ENCODE measurements at regions of chr2 and their contacts with region 1.

Region 1: GRCh38 chr2:113080134-113080533 is 12.4 kb downstream of the IL1F10 start:
- DNase-seq: no peak
- ATAC-seq: peak; percentile 88
- H3K4me3 ChIP-seq: no peak overlapping the region
- H3K27ac ChIP-seq: no peak overlapping the region
- H3K4me1 ChIP-seq: no peaks in the 10 kb centered on the region
- H3K27me3 ChIP-seq: no peaks in the 10 kb centered on the region; a peak in 1 of 4 replicates
- CTCF ChIP-seq: peak; percentile 86 to 89 (median 87)
- EP300 ChIP-seq: no peak
- POLR2A ChIP-seq: no peak
- RAD21 ChIP-seq: peak; percentile 82

Region 2: DNA sequence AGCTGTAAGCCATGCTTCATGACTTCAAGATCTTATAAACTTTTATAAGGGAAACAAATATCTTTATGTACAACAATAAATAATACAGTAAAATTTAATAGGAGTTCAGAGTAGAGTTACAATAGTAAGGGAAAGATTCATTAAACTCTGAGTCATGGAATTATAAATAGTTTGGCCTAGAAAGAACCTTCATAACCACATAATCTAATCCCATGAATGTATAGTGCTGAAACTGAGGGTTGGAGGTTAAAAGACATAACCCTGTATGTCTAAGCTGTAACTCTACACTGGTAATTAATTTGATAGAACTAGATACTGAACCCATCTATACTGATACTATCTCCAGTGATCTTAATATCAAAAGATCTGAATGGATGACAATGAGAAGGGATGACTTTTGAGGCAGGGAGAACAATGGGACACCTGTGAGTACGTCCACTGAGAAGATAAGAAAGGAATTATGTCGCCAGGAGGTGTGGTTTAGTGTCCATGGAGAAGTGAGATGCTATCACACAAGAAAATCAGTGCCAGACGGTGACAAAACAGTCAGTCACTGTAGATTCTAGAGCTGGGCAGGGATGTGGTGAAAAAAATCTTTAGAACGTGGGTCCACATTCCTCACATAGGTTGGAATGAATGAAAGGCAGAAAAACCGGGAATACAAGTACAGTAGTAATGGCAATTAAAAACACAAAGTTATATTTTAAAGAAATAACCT is 11.3 kb before region 1 on chr2:
- CTCF ChIA-PET with region 1: interaction called, 14 read pairs
- POLR2A ChIA-PET with region 1: no interaction called
- RAD21 ChIA-PET with region 1: interaction called, 3 read pairs
- SMC1A ChIA-PET with region 1: no interaction called
- in situ Hi-C with region 1: no loop called
- intact Hi-C with region 1: no loop called
- DNase-seq: no peak
- ATAC-seq: no peak
- H3K4me3 ChIP-seq: no peak overlapping the region
- H3K27ac ChIP-seq: no peak overlapping the region
- H3K4me1 ChIP-seq: no peaks in the 10 kb centered on the region
- H3K27me3 ChIP-seq: 0 out of 4 replicates have a peak, but pooled peaks cover 0 to 1% of the 10 kb centered on the region in 2 experiments
- CTCF ChIP-seq: no peak
- EP300 ChIP-seq: no peak
- POLR2A ChIP-seq: no peak
- RAD21 ChIP-seq: no peak

Region 3: DNA sequence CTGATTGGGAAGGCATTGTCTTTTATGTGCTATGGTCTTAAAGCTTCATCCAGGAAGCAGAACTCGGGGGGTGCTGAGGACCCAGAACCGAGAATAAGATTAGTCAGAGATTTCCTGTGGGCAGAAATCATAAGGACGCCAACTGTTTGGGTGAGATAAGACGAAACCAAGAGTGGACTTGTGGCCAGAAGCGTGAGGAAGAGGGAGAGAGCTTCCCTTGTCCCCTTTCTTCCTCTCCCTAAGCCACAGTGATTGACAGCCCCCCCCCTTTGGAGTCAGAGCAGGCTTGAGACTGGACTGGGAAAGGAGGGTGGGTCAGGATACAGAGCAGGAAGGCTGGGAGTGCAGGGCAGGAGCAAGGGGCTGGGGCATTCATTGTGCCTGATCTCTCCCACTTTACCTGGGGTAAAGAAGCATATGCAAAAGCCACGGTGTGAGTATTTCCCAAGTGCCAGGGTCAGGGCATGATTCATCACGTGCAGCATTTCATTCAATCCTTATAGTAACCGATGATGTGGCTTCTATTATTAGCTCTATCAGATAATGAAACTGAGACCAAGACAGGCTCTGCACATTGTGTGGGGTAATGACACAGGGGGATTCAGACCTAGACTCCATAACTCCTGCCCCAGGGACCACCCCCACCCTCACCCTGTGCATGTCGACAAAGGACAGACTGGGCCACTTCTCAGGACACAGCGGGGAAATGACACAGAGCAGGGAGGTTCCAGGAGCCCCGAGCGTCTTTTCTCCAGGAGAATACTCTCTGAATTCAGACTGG is 44.2 kb after region 1 on chr2:
- CTCF ChIA-PET with region 1: interaction called, 10 read pairs
- POLR2A ChIA-PET with region 1: no interaction called
- RAD21 ChIA-PET with region 1: interaction called, 4 read pairs
- SMC1A ChIA-PET with region 1: interaction called, 4 read pairs
- in situ Hi-C with region 1: no loop called
- intact Hi-C with region 1: no loop called
- DNase-seq: peak; percentile 38
- ATAC-seq: peak; percentile 78
- H3K4me3 ChIP-seq: peak overlapping the region; percentile 9; the same call in 1 of the 2 replicates
- H3K27ac ChIP-seq: peak overlapping the region; percentile 6; the same call in 1 of the 2 replicates
- H3K4me1 ChIP-seq: peaks cover 11% of the 10 kb centered on the region
- H3K27me3 ChIP-seq: no peaks in the 10 kb centered on the region
- CTCF ChIP-seq: no peak
- EP300 ChIP-seq: no peak
- POLR2A ChIP-seq: no peak
- RAD21 ChIP-seq: no peak

Region 4: DNA sequence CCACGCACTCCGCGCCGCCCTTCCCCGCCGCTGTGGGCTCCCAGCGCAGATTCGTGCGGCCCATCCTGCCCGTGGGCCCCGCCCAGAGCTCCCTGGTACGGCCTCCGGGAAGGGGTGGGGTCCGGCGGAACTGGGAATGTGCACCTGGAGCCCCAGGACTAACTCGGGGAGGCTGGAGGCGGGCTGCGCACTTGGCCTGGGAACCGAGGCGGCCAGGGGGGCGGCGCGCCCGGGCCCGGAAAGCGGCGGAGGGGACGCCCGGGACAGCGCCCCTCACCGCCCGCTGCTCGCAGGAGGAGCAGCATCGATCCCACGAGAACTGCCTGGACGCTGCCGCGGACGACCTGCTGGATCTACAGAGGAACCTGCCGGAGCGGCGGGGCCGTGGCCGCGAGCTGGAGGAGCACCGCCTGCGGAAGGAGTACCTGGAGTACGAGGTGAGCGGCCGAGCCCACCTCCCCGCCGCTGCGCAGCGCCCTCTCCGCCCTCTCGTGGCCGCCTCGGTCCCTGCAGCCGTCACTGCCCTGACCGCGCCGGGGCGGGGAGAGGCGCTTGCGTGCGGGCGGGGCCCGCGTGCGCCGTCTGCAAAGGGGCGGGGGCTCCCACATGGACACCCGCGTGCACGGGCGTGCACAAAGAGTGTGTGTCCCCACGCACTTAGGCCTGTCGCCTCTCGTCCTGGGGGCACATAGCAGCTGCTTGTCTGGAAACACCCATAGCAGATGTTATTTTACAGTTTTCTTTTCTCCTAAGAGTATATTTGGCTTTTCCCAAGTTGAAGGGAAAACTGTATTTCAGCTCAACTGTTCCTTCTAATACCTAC is 118.9 kb after region 1 on chr2:
- CTCF ChIA-PET with region 1: interaction called, 36 read pairs
- POLR2A ChIA-PET with region 1: no interaction called
- RAD21 ChIA-PET with region 1: interaction called, 9 read pairs
- SMC1A ChIA-PET with region 1: interaction called, 8 read pairs
- in situ Hi-C with region 1: no loop called
- intact Hi-C with region 1: loop called (anchors 2 kb)
- DNase-seq: no peak
- ATAC-seq: peak; percentile 89
- H3K4me3 ChIP-seq: no peak overlapping the region
- H3K27ac ChIP-seq: no peak overlapping the region
- H3K4me1 ChIP-seq: no peaks in the 10 kb centered on the region
- H3K27me3 ChIP-seq: no peaks in the 10 kb centered on the region
- CTCF ChIP-seq: peak; percentile 54 to 80 (median 75)
- EP300 ChIP-seq: no peak
- POLR2A ChIP-seq: no peak
- RAD21 ChIP-seq: peak; percentile 40

Region 5: DNA sequence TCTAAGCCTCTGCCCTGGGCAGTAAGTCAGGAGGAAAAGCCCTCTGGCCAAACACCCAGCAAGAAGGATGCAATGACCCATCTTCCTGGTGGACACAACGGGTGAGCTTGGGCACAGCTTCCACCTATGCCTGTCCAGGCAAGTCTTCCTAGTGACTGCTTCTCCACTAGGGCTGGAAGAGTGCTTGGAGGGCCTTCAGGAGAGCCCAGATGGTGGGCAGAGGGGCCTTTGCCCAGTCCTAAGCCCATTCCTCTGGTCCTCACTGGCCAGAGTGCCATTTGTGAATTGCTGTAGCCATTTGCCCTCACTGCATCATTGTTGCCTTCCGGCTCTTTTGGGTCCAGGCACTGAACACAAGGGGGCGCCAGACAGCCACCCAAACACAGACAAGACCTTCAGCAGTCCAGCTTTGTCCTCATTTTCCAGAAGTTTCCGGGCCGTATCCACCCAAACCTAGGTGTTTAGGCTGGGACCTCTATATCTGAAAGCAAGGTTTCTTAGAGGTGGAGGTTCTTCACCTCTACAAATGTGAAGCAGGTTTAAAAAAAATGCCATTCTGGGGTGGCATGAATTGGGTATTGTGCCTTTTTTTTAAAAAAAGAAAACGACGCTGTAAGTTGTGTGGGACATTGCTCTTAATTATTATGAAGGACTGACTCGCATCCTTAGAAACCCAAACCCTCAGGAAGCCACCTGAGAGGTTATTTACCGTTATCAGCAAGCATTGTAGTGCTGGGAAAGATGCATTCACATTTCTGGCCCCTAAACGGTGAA is 169.1 kb after region 1 on chr2:
- CTCF ChIA-PET with region 1: interaction called, 10 read pairs
- POLR2A ChIA-PET with region 1: no interaction called
- RAD21 ChIA-PET with region 1: interaction called, 4 read pairs
- SMC1A ChIA-PET with region 1: no interaction called
- in situ Hi-C with region 1: no loop called
- intact Hi-C with region 1: no loop called
- DNase-seq: peak; percentile 23
- ATAC-seq: peak; percentile 95
- H3K4me3 ChIP-seq: no peak overlapping the region
- H3K27ac ChIP-seq: no peak overlapping the region
- H3K4me1 ChIP-seq: peaks cover 8% of the 10 kb centered on the region; the same call in 1 of the 2 replicates
- H3K27me3 ChIP-seq: no peaks in the 10 kb centered on the region
- CTCF ChIP-seq: peak; percentile 90 to 93 (median 92)
- EP300 ChIP-seq: no peak
- POLR2A ChIP-seq: no peak
- RAD21 ChIP-seq: peak; percentile 86

Measured in GM12878 (cell line).